PC-3 (cell line): ENCODE measurements at regions of chr2 and their contacts with region 1.

Region 1: DNA sequence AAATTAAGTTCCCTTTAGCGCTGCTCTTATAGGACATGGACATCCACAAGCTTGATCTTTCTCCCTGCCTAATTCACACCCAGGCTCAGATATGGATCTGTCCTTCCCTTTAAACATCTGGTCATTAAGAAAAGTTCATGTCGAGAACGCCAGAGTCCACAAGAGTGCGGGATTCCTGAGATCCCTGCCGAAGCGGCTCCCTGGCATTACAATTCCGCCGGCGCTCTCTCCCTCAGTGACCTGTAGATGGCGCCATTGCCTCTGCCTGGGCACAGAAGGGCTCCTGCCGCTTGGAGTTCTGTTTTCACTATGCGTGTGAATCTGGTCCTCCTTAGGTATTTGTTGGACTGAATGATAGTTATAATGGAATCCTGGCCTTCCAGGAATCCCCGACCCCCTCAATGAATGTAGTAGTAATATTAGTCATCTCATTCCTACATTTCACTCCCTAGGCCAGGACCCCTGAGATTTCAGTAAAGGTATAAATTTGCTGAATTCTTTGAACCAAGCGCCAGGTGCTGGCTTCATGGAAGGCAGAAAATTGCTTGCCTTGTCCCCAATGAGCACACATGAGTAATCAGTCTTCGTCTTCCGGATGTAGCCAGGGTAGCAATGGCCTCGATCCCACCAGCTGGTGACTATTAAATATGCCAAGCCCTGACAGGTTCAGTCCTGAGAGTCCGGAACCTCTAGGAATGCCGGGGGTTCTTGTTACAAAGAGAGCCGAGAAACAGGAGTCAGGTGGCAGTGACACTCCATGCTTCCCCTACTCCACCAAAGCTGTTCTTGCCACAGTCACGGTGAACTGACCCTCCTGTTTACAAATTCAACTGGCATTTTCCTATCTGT is 26.4 kb upstream of the CD207 start:
- DNase-seq: peak; percentile 87
- ATAC-seq: peak; percentile 97
- H3K4me3 ChIP-seq: no peak overlapping the region
- H3K27ac ChIP-seq: no peak overlapping the region
- H3K4me1 ChIP-seq: no peaks in the 10 kb centered on the region
- H3K27me3 ChIP-seq: peaks cover 44% of the 10 kb centered on the region
- CTCF ChIP-seq: peak; percentile 98

Region 2: DNA sequence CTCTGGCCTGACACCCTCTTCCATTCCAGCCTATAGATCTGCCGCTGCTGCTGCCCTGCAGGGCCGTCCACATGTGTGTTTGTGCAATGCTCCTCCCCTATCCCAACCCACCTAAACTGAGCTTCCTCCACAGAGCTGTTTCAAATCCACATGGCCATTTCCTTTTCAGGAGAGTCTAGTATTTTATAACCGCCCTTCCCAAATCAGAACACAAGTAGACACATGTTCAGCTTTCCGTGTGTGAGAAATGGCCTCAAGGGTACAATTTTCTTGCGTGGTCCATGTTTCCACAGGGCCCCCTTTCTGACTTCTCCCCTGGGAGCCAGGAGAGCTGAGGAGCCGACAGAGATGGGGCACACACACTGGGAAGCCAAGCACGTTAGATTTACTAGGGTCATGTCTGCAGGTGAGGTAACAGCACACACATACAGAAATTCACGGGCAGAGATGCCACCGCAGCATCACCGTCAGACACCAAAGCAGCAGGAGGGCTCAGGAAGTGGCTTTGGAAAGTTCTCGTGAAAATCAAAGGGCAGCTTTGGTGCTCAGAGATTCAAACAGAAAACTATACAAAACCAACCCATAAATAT is 205.5 kb before region 1 on chr2:
- CTCF ChIA-PET with region 1: no interaction called
- POLR2A ChIA-PET with region 1: no interaction called
- intact Hi-C with region 1: loop called (anchors 2 kb)
- DNase-seq: no peak
- ATAC-seq: no peak
- H3K4me3 ChIP-seq: no peak overlapping the region
- H3K27ac ChIP-seq: no peak overlapping the region
- H3K4me1 ChIP-seq: no peaks in the 10 kb centered on the region
- H3K27me3 ChIP-seq: peaks cover 59% of the 10 kb centered on the region
- CTCF ChIP-seq: no peak

Region 3: GRCh38 chr2:70748002-70748784 is 113.8 kb before region 1 on chr2:
- CTCF ChIA-PET with region 1: no interaction called
- POLR2A ChIA-PET with region 1: no interaction called
- intact Hi-C with region 1: no loop called
- DNase-seq: no peak
- ATAC-seq: no peak; the same call in 1 of the 2 replicates
- H3K4me3 ChIP-seq: no peak overlapping the region
- H3K27ac ChIP-seq: no peak overlapping the region
- H3K4me1 ChIP-seq: no peaks in the 10 kb centered on the region
- H3K27me3 ChIP-seq: peaks cover 47% of the 10 kb centered on the region
- CTCF ChIP-seq: peak; percentile 22; the same call in 1 of the 2 replicates

Region 4: GRCh38 chr2:70789304-70790135 is 72.5 kb before region 1 on chr2:
- CTCF ChIA-PET with region 1: no interaction called
- POLR2A ChIA-PET with region 1: no interaction called
- intact Hi-C with region 1: loop called (anchors 5 kb)
- DNase-seq: peak; percentile 73
- ATAC-seq: peak; percentile 90
- H3K4me3 ChIP-seq: peak overlapping the region; percentile 29
- H3K27ac ChIP-seq: no peak overlapping the region
- H3K4me1 ChIP-seq: no peaks in the 10 kb centered on the region
- H3K27me3 ChIP-seq: peaks cover 58% of the 10 kb centered on the region
- CTCF ChIP-seq: peak; percentile 84

Region 5: GRCh38 chr2:70828914-70829824 is 32.8 kb before region 1 on chr2:
- CTCF ChIA-PET with region 1: no interaction called
- POLR2A ChIA-PET with region 1: no interaction called
- intact Hi-C with region 1: no loop called
- DNase-seq: no peak
- ATAC-seq: no peak
- H3K4me3 ChIP-seq: no peak overlapping the region
- H3K27ac ChIP-seq: no peak overlapping the region
- H3K4me1 ChIP-seq: no peaks in the 10 kb centered on the region
- H3K27me3 ChIP-seq: peaks cover 64% of the 10 kb centered on the region
- CTCF ChIP-seq: no peak

Region 6: DNA sequence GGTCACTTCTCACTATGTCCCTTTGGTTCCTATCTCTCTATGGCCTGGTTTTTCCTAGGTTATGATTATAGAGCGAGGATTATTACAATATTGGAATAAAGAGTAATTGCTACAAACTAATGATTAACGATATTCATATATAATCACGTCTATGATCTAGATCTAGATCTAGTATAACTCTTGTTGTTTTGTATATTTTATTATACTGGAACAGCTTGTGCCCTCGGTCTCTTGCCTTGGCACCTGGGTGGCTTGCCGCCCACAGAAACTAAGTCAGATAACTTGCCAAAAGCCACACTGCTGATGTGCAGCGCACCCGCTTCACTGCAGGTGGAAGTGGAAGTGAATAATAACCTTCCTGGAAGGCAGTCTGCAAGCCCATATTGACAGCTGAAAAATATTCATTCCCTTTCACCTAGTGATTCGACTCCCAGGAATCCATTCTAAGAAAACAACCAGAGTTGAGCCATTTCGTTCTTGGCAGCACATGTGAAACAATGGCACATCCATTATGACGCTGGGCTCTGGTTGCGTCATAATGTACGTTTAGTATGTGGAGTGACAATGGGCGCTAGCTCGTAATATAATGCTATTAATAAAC is 115.7 kb after region 1 on chr2:
- CTCF ChIA-PET with region 1: no interaction called
- POLR2A ChIA-PET with region 1: no interaction called
- intact Hi-C with region 1: loop called (anchors 2 kb)
- DNase-seq: peak; percentile 57
- ATAC-seq: peak; percentile 54; the same call in 1 of the 2 replicates
- H3K4me3 ChIP-seq: peak overlapping the region; percentile 70
- H3K27ac ChIP-seq: no peak overlapping the region
- H3K4me1 ChIP-seq: peaks cover 16% of the 10 kb centered on the region
- H3K27me3 ChIP-seq: no peaks in the 10 kb centered on the region
- CTCF ChIP-seq: peak; percentile 39